ENCODE measurements at regions of chr15 and their contacts with region 1.

Region 1: GRCh38 chr15:63922261-63922904 is 88.6 kb upstream of the HERC1 start:
- DNase-seq: no peak
- H3K4me3 Mint-ChIP-seq: no peak overlapping the region
- H3K27ac Mint-ChIP-seq: no peak overlapping the region
- H3K4me1 Mint-ChIP-seq: peaks cover 28% of the 10 kb centered on the region
- H3K27me3 Mint-ChIP-seq: peaks cover 2% of the 10 kb centered on the region

Region 2: GRCh38 chr15:63896336-63897115 is 25.9 kb before region 1 on chr15:
- intact Hi-C with region 1: loop called (anchors 2 kb)
- DNase-seq: peak; percentile 67
- H3K4me3 Mint-ChIP-seq: peak overlapping the region; percentile 17
- H3K27ac Mint-ChIP-seq: peak overlapping the region; percentile 61
- H3K4me1 Mint-ChIP-seq: peaks cover 83% of the 10 kb centered on the region
- H3K27me3 Mint-ChIP-seq: peaks cover 4% of the 10 kb centered on the region

Measured in activated T-helper 1 cell treated with anti-CD3 and anti-CD28 coated beads, Interleukin-12 subunit alpha, Interleukin-12 subunit beta, Interleukin-2, Interleukin-4 antibody, amounts not matched to agents 30 ng/mL and 10 ng/mL and 1 ng/mL, durations not matched to agents 14 hours and 24 hours and 36 hours (primary cell).